PC-9 (cell line): ENCODE measurements at regions of chr15 and their contacts with region 1.

Region 1: DNA sequence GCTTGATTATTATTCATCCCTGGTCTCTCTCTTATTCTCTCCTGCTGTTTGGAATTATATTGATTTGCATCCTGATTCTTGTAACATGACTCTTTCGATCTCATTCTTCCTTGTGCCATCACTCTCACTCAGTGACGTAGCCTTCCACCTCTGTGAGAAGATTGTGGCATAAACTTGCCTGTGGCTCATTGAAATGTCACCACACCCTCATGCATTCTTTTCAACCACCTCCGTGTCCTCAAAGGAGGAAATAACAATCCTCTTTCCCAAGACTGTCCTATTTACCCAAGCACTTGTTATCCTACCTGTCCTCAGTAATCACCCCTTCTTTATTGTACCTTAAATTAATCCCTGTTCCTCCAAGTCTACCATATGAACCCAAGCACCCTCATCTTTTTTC is 41.2 kb upstream of the GCNT3 start:
- DNase-seq: peak; percentile 67 to 98
- H3K4me3 ChIP-seq: no peak overlapping the region
- H3K27ac ChIP-seq: peak overlapping the region; percentile 95
- H3K4me1 ChIP-seq: peaks cover 35% of the 10 kb centered on the region
- H3K27me3 ChIP-seq: no peaks in the 10 kb centered on the region
- CTCF ChIP-seq: no peak

Region 2: GRCh38 chr15:59553879-59554735 is 16.3 kb before region 1 on chr15:
- CTCF ChIA-PET with region 1: interaction called, 3 read pairs
- POLR2A ChIA-PET with region 1: interaction called, 4 read pairs
- intact Hi-C with region 1: loop called (anchors 1 kb)
- DNase-seq: peak; percentile 49 to 90
- H3K4me3 ChIP-seq: no peak overlapping the region
- H3K27ac ChIP-seq: peak overlapping the region; percentile 53
- H3K4me1 ChIP-seq: peaks cover 53% of the 10 kb centered on the region
- H3K27me3 ChIP-seq: no peaks in the 10 kb centered on the region
- CTCF ChIP-seq: no peak

Region 3: DNA sequence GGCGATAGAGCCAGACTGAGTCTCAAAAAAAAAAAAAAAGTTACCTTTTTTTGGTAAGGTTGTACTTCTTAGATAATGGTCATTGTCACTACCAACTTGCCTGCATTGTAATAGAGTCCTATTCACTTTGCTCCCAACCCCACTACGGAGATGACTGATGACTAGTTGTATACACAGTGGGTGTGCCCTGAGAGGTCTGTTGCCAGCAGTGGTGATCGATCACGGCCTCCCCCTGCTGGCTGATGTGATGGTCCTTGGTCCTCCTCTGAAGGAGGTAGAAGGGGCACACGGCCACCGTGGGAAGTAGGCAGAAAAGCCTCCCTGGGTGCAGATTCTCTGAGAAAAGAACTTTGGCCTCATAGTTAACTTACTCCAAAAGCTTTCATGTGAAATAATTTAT is 51.9 kb after region 1 on chr15:
- CTCF ChIA-PET with region 1: no interaction called
- POLR2A ChIA-PET with region 1: no interaction called
- intact Hi-C with region 1: loop called (anchors 5 kb)
- DNase-seq: peak; percentile 45 to 68
- H3K4me3 ChIP-seq: no peak overlapping the region
- H3K27ac ChIP-seq: no peak overlapping the region
- H3K4me1 ChIP-seq: no peaks in the 10 kb centered on the region
- H3K27me3 ChIP-seq: no peaks in the 10 kb centered on the region
- CTCF ChIP-seq: peak; percentile 69

Region 4: GRCh38 chr15:59688841-59689625 is 118.7 kb after region 1 on chr15 and contains the start of gene BNIP2:
- CTCF ChIA-PET with region 1: no interaction called
- POLR2A ChIA-PET with region 1: no interaction called
- intact Hi-C with region 1: no loop called
- DNase-seq: peak; percentile 90 to 98
- H3K4me3 ChIP-seq: peak within 1 kb of the TSS; percentile 73
- H3K27ac ChIP-seq: peak within 1 kb of the TSS; percentile 95
- H3K4me1 ChIP-seq: peaks cover 15% of the 10 kb centered on the region
- H3K27me3 ChIP-seq: no peaks in the 10 kb centered on the region
- CTCF ChIP-seq: no peak
- total RNA-seq, gene BNIP2: 59.5 and 64.3 TPM in 2 replicates

Region 5: DNA sequence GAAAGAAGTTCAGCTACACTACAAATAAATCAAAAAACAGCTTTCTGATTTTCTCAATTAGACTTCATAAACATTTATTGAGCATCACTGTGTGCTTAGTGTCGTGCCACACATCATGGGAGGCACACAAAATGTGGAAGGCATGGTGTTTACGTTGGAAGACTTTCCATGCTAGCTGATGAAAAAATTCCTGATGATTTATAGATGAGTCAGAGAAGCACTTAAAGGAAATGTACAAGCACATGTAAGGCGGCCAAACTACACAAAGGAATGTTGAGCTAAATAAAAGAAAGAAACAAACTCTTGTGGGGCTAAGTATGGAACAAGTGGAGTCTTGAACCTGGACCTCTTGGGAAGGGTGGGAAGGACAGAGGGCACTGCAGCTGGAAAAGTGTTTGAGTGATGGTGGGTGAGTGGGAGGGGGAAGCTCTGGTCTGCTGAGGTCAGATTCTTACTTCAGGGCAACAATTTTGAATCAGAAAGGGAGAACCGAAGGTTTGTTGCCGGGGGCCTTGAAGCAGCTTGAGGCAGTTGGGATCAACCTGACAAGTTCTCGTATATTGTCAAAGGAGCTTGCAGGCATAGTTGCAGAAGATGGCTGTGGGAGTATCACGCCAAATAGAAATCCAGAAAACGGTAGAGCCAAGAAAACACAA is 500.6 kb after region 1 on chr15:
- CTCF ChIA-PET with region 1: interaction called, 22 read pairs
- POLR2A ChIA-PET with region 1: no interaction called
- intact Hi-C with region 1: no loop called
- DNase-seq: peak in 1 of 2 experiments; percentile 70
- H3K4me3 ChIP-seq: no peak overlapping the region
- H3K27ac ChIP-seq: peak overlapping the region; percentile 60
- H3K4me1 ChIP-seq: peaks cover 12% of the 10 kb centered on the region
- H3K27me3 ChIP-seq: no peaks in the 10 kb centered on the region
- CTCF ChIP-seq: no peak